GM10248 (cell line): ENCODE measurements at regions of chr19 and their contacts with region 1.

Region 1: DNA sequence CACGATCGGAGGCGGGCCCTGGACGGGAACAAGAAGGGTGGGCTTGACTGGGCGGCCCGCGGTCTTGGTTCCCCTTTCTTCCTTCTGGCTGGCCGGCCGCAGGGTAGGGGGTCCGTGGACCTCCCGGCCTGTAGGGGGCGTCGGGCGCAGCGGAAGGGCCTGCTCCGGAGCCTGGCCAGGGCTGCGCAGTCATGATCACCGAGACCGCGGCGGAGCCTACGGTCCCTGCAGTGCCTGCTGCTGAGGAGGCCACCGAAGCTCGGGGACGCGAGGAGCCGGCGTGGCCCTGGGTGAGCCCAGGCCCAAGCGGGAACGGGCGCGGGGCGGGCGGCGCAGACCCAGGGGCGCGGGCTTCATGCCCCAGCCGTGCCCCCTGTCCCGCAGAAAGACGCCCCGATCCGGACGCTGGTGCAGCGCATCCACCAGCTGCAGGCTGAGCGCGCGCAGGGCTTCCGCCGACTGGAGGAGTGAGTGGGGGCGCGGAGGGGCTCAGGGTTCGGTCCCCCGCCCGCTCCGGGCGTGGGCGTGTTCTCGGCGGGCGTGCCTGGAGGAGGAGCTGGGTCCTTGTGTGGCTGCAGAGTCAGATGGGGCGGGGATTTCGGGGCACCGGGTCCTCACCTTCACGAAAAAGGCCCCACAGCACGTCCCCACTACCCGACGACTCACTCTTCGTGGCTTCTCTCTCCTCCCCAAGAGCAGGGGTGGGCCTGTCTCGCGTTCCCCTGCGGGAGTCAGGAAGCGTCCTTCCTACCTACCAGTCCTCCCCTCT is at the start of gene REX1BD:
- DNase-seq: peak; percentile 86
- CTCF ChIP-seq: peak; percentile 96

Region 2: DNA sequence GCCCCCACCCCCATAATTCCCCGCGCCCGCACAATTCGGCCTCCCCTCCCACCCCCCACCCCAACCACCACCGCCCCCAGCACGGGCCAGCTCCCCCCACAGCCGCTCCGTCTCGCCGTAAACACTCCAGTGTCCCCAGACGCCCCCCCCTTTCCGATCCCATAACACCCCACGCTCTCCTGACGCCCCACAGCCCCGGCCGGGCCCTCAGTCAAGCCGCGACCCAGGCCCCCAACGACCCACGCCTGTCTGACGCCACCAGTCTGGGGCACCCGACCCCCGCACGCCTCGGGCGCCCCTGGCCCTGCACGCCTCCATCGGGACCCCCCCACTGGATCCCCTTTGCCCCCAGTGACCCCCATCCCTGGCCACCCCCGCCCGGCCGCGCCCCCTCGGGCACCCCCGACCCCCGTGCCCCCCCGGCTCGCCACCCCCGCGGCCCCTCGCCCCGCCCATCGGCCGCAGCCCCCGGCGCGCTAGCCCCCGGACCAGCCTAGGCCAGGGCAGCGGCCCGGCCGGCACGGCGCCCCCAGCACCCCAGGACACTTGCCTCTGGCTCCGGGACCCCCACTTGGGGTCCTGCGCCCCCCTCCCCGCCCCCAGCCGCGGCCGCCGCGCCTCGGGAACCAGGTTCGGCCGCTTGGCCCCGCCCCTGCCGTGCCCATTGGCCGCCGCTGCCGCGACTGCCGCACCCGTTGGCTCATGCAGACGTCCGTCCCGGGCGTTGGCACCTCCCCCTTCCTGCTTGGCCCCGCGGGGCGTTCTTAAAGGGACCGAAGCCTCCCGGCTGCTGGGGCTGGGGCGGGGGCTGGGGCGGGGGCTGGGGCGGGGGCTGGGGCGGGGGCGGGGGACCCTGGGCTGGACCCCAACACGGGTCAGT is 45.6 kb before region 1 on chr19 and contains the start of gene FKBP8:
- CTCF ChIA-PET with region 1: interaction called, 10 read pairs
- POLR2A ChIA-PET with region 1: no interaction called
- DNase-seq: peak; percentile 98
- CTCF ChIP-seq: no peak

Region 3: GRCh38 chr19:18557474-18558201 is 31.2 kb before region 1 on chr19 and contains the start of gene KXD1:
- CTCF ChIA-PET with region 1: interaction called, 12 read pairs
- POLR2A ChIA-PET with region 1: interaction called, 4 read pairs
- DNase-seq: peak; percentile 98
- CTCF ChIP-seq: no peak

Region 4: DNA sequence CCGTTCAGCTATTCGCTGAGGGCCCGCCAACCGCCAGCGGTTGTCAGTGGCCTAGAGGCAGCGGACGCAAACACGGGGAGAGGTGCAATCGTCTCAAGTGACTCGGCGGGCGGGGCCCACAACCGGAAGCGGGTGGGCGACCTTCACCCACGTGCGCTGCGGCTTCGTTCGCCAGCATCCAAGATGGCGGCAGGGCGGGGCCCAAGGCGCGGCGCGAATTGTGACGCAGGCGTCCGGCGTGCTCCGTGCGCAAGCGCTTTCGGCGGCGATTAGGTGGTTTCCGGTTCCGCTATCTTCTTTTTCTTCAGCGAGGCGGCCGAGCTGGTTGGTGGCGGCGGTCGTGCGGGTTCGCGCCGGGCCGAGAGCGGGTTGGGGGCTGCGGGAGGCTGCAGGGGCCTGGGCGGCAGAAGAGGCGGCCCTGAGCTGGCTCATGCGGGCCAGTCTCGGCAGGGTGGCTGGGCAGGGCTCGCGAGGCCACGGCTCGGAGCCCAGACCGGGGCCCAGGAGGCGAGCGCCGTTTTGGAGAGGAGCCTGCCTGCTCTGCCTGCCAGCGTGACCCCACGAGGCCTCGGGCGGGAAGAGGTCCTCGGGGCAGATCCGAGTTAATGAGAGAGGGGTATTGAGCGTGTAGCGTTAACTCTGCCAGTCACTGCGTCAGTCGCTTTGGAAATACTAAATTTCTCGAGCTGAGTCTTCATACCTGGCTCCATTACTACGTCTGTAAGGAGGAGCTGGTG is 17.1 kb before region 1 on chr19 and contains the start of gene UBA52:
- CTCF ChIA-PET with region 1: interaction called, 111 read pairs
- POLR2A ChIA-PET with region 1: interaction called, 16 read pairs
- DNase-seq: peak; percentile 95
- CTCF ChIP-seq: no peak

Region 5: DNA sequence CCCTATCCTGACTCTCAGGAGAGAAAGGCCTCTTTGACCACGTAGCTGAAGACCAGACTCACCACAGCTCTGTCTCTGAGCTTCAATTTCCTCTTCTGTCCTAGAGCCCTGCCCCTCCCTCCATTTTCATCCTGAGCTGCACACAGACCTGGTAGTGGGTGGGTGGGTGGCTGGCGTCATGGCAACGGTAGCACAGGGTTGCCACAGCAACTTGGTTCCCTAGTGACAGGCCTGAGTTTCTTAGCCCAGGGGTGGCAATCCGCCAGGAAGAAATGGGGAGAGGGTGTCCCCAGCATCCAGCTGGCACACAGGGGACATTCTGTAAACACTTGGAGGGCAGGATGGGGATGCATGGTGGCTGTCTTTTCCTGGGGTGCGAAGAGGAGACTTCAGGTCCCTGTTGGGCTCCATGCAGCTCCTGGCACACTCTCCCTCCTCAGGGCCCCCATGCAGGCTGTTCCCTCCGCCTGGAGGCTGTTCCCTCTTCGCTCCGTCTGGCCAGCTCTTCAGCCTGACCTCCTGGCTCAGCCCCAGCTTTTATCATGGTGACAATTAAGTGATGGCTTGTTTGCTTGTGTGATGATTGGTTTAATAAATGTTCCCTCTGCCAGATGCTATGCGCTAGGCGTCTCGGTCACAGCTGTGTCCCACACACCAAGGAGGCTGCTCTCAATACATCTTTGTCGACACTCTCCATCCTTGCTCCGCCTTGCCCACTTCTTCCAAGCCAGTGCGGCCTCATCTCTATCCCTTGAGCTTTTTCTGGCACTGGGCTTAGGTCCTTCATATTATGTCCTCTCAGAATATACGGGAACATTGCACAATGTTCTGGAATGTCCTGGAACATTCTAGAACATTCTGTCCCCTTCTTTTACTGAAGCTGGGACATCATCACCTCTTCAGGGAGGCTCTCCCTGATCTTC is 40.6 kb after region 1 on chr19:
- CTCF ChIA-PET with region 1: interaction called, 11 read pairs
- POLR2A ChIA-PET with region 1: no interaction called
- DNase-seq: no peak
- CTCF ChIP-seq: no peak